ENCODE measurements at regions of chr15 and their contacts with region 1.

Region 1: GRCh38 chr15:34587717-34588674 is 4.5 kb upstream of the GOLGA8B start:
- DNase-seq: no peak
- H3K4me3 ChIP-seq: peak overlapping the region in 3 of 4 donors; percentile 34 to 51 (median 34)
- H3K27ac ChIP-seq: peak overlapping the region in 2 of 4 donors; percentile 18 to 54
- H3K4me1 ChIP-seq: peaks cover 7 to 13% (median 10%) of the 10 kb centered on the region in 4 donors
- H3K27me3 ChIP-seq: peaks cover 0 to 4% (median 0%) of the 10 kb centered on the region in 4 donors
- CTCF ChIP-seq: peak; percentile 77 to 83 (median 81)
- EP300 ChIP-seq: no peak
- POLR2A ChIP-seq: no peak

Region 2: DNA sequence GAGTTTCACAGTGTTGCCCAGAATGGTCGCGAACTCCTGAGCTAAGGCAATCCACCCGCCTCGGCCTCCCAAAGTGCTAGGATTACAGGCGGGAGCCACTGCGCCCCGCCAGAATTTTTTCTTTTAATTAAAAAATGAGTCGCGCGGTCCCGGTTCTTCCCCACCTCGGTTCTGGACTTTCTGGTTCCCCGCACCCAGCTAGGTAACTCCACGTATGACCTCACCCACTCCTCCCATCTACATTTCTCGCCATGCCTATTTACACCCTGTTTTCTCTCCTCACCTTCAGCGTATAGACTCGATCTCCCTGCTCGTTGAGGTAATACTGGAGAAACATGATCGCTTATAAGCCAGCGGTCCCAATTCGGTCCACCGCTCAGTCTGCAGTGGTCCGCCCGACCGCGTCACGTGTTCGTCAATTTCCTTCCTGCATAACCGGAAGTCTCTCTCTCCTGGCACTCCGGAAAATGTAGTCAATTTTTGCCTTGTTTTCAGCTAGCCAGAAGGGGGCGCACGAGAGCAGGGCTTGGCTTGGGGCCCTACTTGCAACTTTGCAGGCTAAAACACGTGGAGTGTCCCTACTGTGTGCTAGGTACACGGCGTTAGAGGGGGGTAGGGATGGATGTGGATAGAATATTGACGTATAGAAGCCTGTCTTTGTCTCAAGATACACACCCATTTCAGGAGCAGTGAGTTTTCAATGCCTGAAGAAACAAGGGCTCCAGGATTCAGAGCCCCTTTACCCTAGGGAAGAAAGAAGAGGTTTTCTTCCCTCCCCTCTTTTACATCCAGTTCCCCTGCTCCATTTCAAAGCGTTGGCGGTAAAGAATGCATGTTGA is 245.0 kb before region 1 on chr15 and contains the starts of genes NOP10 and NUTM1:
- intact Hi-C with region 1: loop called (anchors 10 kb)
- DNase-seq: peak; percentile 97
- H3K4me3 ChIP-seq: peak within 1 kb of the TSS; percentile 64 to 87 (median 74)
- H3K27ac ChIP-seq: peak within 1 kb of the TSS; percentile 88 to 90 (median 89)
- H3K4me1 ChIP-seq: peaks cover 18 to 29% (median 23%) of the 10 kb centered on the region in 4 donors
- H3K27me3 ChIP-seq: no peaks in the 10 kb centered on the region
- CTCF ChIP-seq: peak; percentile 84 to 97 (median 92)
- EP300 ChIP-seq: no peak
- POLR2A ChIP-seq: peak; percentile 67
- total RNA-seq, gene NOP10: 78.5 to 136 (median 116) TPM
- total RNA-seq, gene NUTM1: not detected

Region 3: GRCh38 chr15:34367101-34368081 is 220.6 kb before region 1 on chr15 and contains the start of gene LPCAT4:
- intact Hi-C with region 1: loop called (anchors 5 kb)
- DNase-seq: peak; percentile 94
- H3K4me3 ChIP-seq: peak within 1 kb of the TSS; percentile 89 to 98 (median 92)
- H3K27ac ChIP-seq: peak within 1 kb of the TSS; percentile 96 to 98 (median 98)
- H3K4me1 ChIP-seq: peaks cover 16 to 31% (median 26%) of the 10 kb centered on the region in 4 donors
- H3K27me3 ChIP-seq: no peaks in the 10 kb centered on the region
- CTCF ChIP-seq: peak; percentile 92 to 97 (median 97)
- EP300 ChIP-seq: no peak
- POLR2A ChIP-seq: no peak
- total RNA-seq, gene LPCAT4: 7.5 to 14.9 (median 11.5) TPM

Region 4: DNA sequence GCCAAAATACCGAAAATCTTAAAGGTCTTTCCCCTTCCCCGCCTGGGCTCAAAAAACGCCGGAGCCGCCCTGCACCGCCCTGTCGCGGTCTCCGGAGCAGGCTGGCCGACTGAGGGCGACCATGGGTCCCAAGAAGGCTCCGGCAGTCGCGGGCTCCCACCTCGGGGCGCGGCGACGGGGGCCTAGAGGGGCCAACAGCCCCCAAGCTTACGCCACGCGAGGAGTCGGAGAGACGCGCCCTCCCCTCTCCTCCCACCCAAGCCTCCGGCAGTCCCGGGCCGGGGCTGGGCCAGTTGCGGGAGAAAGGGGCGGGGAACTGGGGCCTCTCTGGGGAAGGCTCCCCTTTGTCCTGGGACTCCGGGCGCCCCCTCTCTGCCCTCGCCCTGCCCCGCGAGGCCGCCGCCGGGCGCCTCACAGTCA is 73.7 kb before region 1 on chr15:
- intact Hi-C with region 1: loop called (anchors 10 kb)
- DNase-seq: no peak
- H3K4me3 ChIP-seq: peak overlapping the region; percentile 63 to 81 (median 70)
- H3K27ac ChIP-seq: peak overlapping the region; percentile 66 to 77 (median 76)
- H3K4me1 ChIP-seq: peaks cover 0 to 24% (median 20%) of the 10 kb centered on the region in 4 donors
- H3K27me3 ChIP-seq: peaks cover 0 to 7% (median 0%) of the 10 kb centered on the region in 4 donors
- CTCF ChIP-seq: no peak
- EP300 ChIP-seq: no peak
- POLR2A ChIP-seq: no peak

Region 5: DNA sequence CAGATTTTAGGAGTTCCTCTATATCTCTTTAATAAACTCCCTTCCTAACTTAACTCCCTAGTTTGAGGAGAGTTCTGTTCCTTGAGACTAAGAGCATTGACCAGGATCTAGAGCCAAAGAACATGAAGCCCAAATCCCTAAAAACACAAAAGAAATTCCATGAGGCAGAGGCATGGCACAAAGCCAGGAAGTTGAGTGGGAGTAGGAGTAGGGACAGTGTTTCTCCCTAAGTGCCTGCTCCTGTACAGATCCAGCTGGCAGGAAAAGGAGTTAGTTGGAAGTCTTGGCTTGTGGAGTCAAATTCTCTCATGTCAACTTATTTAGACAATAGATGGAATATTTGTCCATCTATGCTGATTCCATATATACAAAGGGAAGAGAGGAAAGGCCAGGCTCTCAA is 196.0 kb after region 1 on chr15:
- intact Hi-C with region 1: no loop called
- DNase-seq: no peak
- H3K4me3 ChIP-seq: no peak overlapping the region
- H3K27ac ChIP-seq: no peak overlapping the region
- H3K4me1 ChIP-seq: no peaks in the 10 kb centered on the region
- H3K27me3 ChIP-seq: no peaks in the 10 kb centered on the region
- CTCF ChIP-seq: no peak
- EP300 ChIP-seq: no peak
- POLR2A ChIP-seq: no peak